BJ (cell line): ENCODE measurements at regions of chr13 and their contacts with region 1.

Region 1: DNA sequence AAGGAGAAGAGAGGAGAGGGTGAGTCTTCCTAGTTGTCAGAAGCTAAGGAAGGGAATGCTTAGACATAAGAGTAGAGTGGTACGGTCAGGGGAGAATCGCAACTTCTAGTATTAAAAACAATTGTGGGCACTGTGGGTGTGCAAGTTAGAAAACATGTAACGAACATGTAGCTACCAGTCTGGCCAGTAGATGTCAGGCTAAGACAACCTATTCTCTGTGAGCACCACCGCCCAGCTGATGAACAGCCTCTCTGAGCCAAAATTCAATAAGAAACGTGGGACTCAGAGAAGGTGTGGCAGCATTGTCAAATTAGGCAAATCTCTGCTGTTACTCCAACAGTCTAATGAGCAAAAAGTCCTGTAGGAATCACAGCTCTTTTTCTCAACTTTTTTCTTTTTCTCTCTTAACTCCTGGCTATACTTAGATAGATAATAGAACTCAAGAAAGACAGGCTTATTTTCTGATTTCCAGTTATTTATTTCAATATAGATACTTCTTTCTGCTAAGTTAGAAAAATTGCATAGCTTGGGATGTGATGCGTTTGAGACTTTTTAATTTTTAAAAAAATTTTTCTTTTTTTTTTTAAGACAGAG is 186.2 kb downstream of the USP12 start:
- DNase-seq: no peak
- H3K4me3 ChIP-seq: no peak overlapping the region
- H3K27me3 ChIP-seq: no peaks in the 10 kb centered on the region; the same call in 1 of the 2 replicates
- CTCF ChIP-seq: peak; percentile 65

Region 2: DNA sequence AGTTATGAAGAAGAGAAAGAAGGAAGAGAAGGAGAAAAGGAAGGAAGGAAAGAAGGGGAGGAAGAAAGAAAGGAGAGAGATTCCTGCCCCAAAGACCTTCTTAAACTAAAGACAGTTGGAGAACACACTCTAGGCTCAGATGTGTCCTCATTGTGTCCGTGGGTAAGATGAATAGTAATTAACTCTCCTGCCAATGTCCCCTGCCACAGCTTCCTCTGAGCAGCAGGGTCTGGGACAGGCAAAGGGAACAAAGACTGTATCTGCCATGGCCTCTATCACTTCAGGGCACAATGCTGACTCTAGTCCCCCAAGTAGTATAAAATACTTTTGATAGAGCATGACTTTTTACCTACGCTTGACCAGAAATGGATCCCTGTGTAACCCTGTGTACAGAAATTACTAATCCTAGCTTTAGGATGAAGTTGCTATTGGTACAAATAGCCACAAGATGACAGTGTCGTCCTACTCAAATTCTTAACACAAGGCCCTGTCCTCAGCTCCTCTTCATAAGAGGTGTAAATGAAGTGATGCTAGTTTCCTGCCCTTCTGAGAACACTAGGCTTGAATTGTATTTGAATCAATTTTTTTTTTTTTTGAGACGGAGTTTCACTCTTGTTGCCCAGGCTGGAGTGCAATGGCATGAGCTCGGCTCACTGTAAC is 38.6 kb before region 1 on chr13:
- CTCF ChIA-PET with region 1: interaction called, 13 read pairs
- POLR2A ChIA-PET with region 1: no interaction called
- DNase-seq: no peak
- H3K4me3 ChIP-seq: no peak overlapping the region
- H3K27me3 ChIP-seq: 0 out of 2 replicates have a peak, but pooled peaks cover 1% of the 10 kb centered on the region
- CTCF ChIP-seq: peak; percentile 80

Region 3: DNA sequence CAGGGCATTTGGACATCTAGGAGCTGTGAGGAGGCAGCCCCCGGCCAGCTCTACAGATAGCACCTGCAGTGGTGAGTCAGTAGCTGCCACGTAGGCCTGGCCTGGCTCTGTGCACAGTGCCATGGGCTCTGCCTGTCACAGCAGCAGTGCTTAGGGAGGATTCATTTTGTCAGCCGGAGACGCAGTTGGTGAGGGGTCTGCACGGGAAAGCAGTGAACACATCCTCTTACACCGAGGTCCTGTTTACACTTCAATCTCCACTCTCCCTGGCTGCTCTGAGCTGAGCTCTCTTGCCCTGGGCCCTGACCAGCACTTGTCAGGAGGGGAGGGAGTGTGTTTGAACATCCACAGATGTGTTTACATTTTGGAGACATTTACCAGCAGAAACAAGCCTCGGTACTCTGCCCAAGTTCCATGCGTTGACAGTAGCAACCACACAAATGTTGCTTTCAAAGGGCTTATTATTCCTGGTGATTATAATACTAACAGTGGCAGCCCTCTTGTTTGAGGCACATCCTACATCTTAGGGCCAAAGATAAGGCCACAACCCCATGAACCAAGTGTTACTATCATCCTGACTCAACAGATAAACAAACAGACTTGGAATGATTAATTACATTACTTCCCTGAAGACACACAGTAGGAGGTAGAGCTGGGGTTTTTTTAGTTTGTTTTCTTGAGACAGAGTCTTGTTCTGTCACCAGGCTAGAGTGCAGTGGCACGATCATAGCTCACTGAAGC is 37.4 kb after region 1 on chr13:
- CTCF ChIA-PET with region 1: interaction called, 11 read pairs
- POLR2A ChIA-PET with region 1: no interaction called
- DNase-seq: no peak
- H3K4me3 ChIP-seq: no peak overlapping the region
- H3K27me3 ChIP-seq: peaks cover 16% of the 10 kb centered on the region
- CTCF ChIP-seq: no peak

Region 4: DNA sequence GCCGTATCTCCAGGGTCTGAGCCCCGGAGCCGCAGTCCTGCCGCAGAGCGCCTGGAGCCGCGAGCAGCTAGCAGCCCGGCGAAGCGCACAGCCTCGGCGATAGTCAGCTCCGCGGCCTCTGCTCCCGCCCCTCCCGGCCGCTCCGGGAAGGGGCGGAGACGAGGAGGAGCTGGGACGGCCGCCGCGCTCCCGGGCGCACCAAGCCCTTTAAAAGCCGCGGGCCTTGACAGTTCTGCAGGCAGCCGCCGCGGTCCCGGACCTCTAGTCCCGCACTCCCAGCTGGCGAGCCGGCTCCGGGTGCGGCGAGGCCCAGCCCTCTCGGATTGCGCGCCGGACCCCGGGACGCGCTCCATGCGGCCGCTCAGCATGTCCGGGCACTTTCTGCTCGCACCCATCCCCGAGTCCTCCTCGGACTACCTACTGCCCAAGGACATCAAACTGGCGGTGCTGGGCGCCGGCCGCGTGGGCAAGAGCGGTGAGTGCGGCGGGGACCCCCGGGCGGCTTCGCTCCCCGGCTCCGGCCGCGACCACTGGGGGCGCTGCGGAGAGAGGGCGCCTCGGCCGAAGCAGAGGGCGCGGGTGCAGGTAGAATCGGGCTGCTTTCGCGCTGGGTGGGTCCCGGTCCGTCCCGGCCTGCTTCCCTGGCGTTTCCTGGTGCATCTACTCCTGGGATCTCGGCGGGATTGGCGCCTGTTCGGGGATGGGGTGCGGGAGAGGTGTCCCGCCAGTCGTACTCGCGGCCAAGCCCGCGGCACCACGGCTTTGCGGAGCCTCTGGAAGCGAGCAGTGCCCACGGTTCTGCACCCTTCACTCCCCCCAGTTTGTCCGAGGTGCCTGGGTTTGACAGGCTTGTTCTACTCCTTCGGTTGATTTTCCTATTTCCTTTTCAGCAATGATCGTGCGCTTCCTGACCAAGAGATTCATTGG is 285.5 kb after region 1 on chr13 and contains the start of gene RASL11A:
- CTCF ChIA-PET with region 1: interaction called, 16 read pairs
- POLR2A ChIA-PET with region 1: interaction called, 3 read pairs
- DNase-seq: no peak
- H3K4me3 ChIP-seq: peak within 1 kb of the TSS; percentile 82
- H3K27me3 ChIP-seq: no peaks in the 10 kb centered on the region
- CTCF ChIP-seq: peak; percentile 67
- polyA plus RNA-seq, gene RASL11A: 37.6 and 67.0 TPM in 2 replicates

Region 5: DNA sequence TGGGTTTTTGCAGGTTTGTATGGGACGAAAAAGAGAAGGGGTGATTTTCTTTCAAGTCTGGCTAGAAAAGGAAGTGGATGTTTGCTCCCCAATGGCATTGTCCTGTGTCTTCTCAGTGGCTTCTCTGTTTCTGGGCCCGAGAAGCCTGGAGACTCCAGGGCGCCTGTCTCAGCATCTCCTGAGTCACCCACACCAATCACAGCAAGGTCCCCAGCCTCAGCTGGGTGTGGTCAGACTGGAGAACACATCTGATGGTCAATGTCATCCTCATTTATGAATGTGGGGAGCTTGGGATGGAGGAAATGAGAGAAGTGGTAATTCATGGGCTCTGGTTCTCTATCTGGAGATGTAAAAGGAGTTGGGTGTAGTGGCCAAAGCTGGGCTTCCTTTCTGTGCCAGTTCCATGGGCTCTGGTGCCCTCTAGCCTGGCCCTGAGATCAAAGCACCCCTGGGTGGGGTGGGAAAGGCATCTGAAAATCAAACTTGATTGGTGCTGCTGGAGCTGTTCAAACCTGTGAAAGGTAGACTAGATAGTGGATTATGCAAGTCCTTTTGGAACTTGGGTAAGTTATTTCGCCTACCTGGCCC is 298.6 kb after region 1 on chr13:
- CTCF ChIA-PET with region 1: interaction called, 70 read pairs
- POLR2A ChIA-PET with region 1: no interaction called
- DNase-seq: no peak
- H3K4me3 ChIP-seq: no peak overlapping the region
- H3K27me3 ChIP-seq: 0 out of 2 replicates have a peak, but pooled peaks cover 1% of the 10 kb centered on the region
- CTCF ChIP-seq: peak; percentile 57

Region 6: GRCh38 chr13:27353166-27353583 is 367.8 kb after region 1 on chr13:
- CTCF ChIA-PET with region 1: interaction called, 227 read pairs
- POLR2A ChIA-PET with region 1: no interaction called
- DNase-seq: no peak
- H3K4me3 ChIP-seq: no peak overlapping the region
- H3K27me3 ChIP-seq: no peaks in the 10 kb centered on the region
- CTCF ChIP-seq: no peak